Naive thymus-derived CD4-positive, alpha-beta T cell (primary cell): ENCODE measurements at regions of chr9 and their contacts with region 1.

Region 1: GRCh38 chr9:87849144-87849758 is 33.4 kb upstream of the SPATA31E1 start:
- DNase-seq: no peak
- ATAC-seq: no peak
- H3K4me3 ChIP-seq: no peak overlapping the region
- H3K4me3 Mint-ChIP-seq: no peak overlapping the region
- H3K27ac ChIP-seq: no peak overlapping the region
- H3K27ac Mint-ChIP-seq: no peak overlapping the region
- H3K4me1 ChIP-seq: no peaks in the 10 kb centered on the region
- H3K4me1 Mint-ChIP-seq: no peaks in the 10 kb centered on the region
- H3K27me3 ChIP-seq: no peaks in the 10 kb centered on the region
- H3K27me3 Mint-ChIP-seq: peaks cover 0 to 10% (median 2%) of the 10 kb centered on the region in 5 donors

Region 2: DNA sequence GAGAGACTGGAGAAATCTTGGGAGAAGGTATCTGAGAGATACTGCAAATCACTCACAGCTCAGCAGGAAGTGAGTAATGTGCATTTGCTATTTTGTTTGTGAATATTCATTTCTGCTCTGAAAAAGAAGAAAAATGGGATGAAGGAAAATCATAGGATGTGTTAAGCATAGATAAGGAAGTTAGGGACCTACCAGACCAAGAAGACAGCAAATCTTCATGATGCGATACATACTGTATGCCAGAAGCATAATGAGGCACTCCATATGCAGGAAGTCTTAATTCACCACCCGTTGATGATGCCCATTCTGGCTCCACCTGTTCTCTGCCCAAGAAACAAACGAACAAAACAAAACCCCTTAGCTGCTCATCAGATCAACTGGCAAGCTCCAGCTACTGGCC is 357.7 kb before region 1 on chr9:
- CTCF ChIA-PET with region 1: no interaction called
- POLR2A ChIA-PET with region 1: no interaction called
- intact Hi-C with region 1: loop called in 1 of 2 experiments (anchors 5 kb)
- DNase-seq: no peak
- ATAC-seq: no peak
- H3K4me3 ChIP-seq: no peak overlapping the region
- H3K4me3 Mint-ChIP-seq: no peak overlapping the region
- H3K27ac ChIP-seq: no peak overlapping the region
- H3K27ac Mint-ChIP-seq: no peak overlapping the region
- H3K4me1 ChIP-seq: no peaks in the 10 kb centered on the region
- H3K4me1 Mint-ChIP-seq: peaks cover 0 to 3% (median 0%) of the 10 kb centered on the region in 7 donors
- H3K27me3 ChIP-seq: no peaks in the 10 kb centered on the region
- H3K27me3 Mint-ChIP-seq: peaks cover 32 to 44% (median 38%) of the 10 kb centered on the region in 5 donors

Region 3: GRCh38 chr9:87766703-87767102 is 82.5 kb before region 1 on chr9:
- CTCF ChIA-PET with region 1: no interaction called
- POLR2A ChIA-PET with region 1: no interaction called
- intact Hi-C with region 1: no loop called
- DNase-seq: no peak
- ATAC-seq: no peak
- H3K4me3 ChIP-seq: no peak overlapping the region
- H3K4me3 Mint-ChIP-seq: no peak overlapping the region
- H3K27ac ChIP-seq: no peak overlapping the region
- H3K27ac Mint-ChIP-seq: no peak overlapping the region
- H3K4me1 ChIP-seq: no peaks in the 10 kb centered on the region
- H3K4me1 Mint-ChIP-seq: peaks cover 0 to 3% (median 0%) of the 10 kb centered on the region in 7 donors
- H3K27me3 ChIP-seq: no peaks in the 10 kb centered on the region
- H3K27me3 Mint-ChIP-seq: peaks cover 0 to 21% (median 5%) of the 10 kb centered on the region in 5 donors

Region 4: DNA sequence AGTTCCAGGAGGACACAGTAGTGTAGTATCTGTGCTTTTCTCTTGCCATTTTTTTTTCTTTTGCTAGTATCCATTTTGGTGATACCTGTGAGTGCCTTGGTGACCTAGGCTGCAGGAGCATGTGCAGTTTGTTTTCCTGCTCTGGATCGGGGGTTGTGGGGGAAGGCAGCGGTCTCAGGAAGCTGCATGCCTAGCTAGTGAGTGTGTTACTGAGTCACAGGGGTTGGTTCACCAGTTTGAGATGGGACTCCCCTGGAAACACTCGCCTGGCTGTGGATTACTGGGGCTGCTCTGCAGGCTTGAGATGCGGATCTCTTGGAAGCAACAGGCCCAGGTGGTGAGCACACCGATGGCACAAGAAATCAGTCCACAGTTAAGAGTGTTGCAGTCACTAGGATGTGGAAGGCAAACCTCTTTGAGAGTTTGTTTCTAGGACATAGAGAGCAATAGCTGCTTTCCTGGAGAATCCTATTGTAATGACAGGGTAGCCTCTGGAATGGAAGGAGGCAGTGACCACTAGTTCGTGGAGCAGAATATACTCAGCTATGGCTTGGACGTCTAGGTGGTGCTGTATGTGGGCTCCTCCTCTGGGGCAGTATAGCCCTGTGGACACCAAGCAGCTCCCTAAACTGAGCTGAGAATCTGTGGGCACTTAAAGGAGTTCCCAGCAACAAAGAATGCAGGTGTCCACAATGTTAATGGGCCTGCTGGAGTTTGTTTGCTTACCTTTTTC is 13.5 kb after region 1 on chr9:
- CTCF ChIA-PET with region 1: no interaction called
- POLR2A ChIA-PET with region 1: no interaction called
- intact Hi-C with region 1: no loop called
- DNase-seq: no peak
- ATAC-seq: no peak
- H3K4me3 ChIP-seq: no peak overlapping the region
- H3K4me3 Mint-ChIP-seq: no peak overlapping the region
- H3K27ac ChIP-seq: no peak overlapping the region
- H3K27ac Mint-ChIP-seq: no peak overlapping the region
- H3K4me1 ChIP-seq: no peaks in the 10 kb centered on the region
- H3K4me1 Mint-ChIP-seq: peaks cover 0 to 1% (median 0%) of the 10 kb centered on the region in 7 donors
- H3K27me3 ChIP-seq: no peaks in the 10 kb centered on the region
- H3K27me3 Mint-ChIP-seq: peaks cover 0 to 6% (median 3%) of the 10 kb centered on the region in 5 donors